ENCODE measurements at regions of chr7 and their contacts with region 1.

Region 1: GRCh38 chr7:150507947-150508602 is 6.6 kb upstream of the GIMAP7 start:
- DNase-seq: no peak
- H3K4me3 ChIP-seq: peak overlapping the region; percentile 4 to 28
- H3K4me3 Mint-ChIP-seq: peak overlapping the region; percentile 78 to 88 (median 85)
- H3K27ac ChIP-seq: peak overlapping the region; percentile 61
- H3K27ac Mint-ChIP-seq: peak overlapping the region; percentile 89 to 96 (median 93)
- H3K4me1 ChIP-seq: peaks cover 95% of the 10 kb centered on the region
- H3K4me1 Mint-ChIP-seq: peaks cover 78 to 97% (median 87%) of the 10 kb centered on the region in 4 donors
- H3K27me3 ChIP-seq: no peaks in the 10 kb centered on the region
- H3K27me3 Mint-ChIP-seq: no peaks in the 10 kb centered on the region

Region 2: DNA sequence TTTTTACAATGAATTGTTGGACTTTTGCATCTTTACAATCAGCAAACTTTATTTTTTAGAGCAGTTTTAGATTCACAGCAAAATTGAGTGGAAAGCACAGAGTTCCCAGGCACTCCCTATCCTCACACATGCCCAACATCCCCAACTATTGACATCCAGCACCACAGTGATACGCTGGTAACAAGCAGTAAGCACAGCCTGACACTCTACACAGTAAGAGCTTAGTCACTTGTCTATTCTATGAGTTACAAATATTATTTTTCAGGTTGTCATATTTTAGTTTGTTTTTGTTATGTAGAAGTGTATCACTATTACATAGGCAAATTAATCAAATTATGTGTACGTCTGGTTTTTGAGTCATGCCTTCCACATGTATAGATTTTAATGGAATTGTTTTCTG is 20.4 kb before region 1 on chr7:
- CTCF ChIA-PET with region 1: interaction called, 10 read pairs
- POLR2A ChIA-PET with region 1: interaction called, 673 read pairs
- intact Hi-C with region 1: no loop called
- DNase-seq: no peak
- H3K4me3 ChIP-seq: no peak overlapping the region
- H3K4me3 Mint-ChIP-seq: no peak overlapping the region
- H3K27ac ChIP-seq: no peak overlapping the region
- H3K27ac Mint-ChIP-seq: peak overlapping the region in 5 of 7 donors; percentile 18 to 42 (median 31)
- H3K4me1 ChIP-seq: peaks cover 58% of the 10 kb centered on the region
- H3K4me1 Mint-ChIP-seq: peaks cover 50 to 83% (median 69%) of the 10 kb centered on the region in 4 donors
- H3K27me3 ChIP-seq: no peaks in the 10 kb centered on the region
- H3K27me3 Mint-ChIP-seq: no peaks in the 10 kb centered on the region

Measured in CD4-positive, alpha-beta memory T cell (primary cell).